ENCODE measurements at regions of chr11 and their contacts with region 1.

Region 1: DNA sequence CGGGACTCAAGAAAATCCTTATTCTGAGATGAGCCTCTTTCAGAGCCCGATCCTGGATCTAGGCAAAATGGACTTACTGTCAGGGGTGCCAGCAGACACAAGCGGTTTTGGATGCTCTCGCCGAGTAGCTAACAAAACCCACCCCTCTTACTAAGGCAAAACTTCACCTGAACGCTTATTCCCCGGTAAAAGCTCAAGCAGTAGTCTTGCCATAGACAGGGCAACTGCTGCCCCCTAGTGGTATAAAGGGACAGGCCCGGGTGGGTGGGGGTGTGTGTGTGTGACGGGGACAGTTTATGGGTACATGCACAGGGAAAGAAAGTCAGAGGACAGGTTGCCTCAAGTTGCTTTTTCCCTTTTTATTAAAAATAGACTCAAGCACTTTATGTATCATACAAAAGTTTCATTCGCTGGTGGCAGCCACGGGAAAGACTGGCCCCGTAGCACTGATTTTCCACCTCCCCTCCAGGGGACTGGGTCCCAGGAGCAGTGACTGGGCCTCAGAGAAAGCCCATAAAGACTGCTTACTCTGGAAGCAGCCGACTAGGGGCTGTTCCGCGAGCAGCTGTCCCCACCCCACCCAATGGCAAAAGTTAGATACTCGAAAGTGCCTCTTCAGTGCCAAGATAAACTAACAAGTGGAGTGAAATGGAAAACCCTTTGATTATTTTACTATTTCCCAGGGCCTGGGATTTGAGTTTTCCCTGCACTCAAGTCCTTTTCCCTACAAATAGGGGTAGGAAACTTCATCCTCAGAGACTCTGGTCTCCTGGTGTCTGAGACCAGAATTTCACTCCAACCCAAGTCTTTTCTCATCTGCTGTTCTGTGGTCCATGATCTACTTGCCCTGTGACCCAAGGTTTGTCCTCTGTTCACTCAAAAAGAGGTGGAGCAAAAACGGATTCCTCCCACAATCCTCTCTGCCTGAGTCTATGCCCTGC is 4.7 kb downstream of the YPEL4 start:
- DNase-seq: peak; percentile 73 to 90 (median 85)
- ATAC-seq: peak; percentile 81 to 89 (median 85)
- H3K4me3 ChIP-seq: no peak overlapping the region
- H3K27ac ChIP-seq: no peak overlapping the region
- H3K4me1 ChIP-seq: peaks cover 0 to 4% (median 4%) of the 10 kb centered on the region in 3 donors
- H3K27me3 ChIP-seq: peaks cover 0 to 2% (median 0%) of the 10 kb centered on the region in 4 donors
- CTCF ChIP-seq: peak; percentile 85 to 91 (median 88)

Region 2: GRCh38 chr11:57340039-57340615 is 304.9 kb before region 1 on chr11:
- intact Hi-C with region 1: loop called in 2 of 3 experiments (anchors 5 to 10 kb)
- DNase-seq: peak in 1 of 6 donors; percentile 8
- ATAC-seq: no peak
- H3K4me3 ChIP-seq: no peak overlapping the region
- H3K27ac ChIP-seq: no peak overlapping the region
- H3K4me1 ChIP-seq: peaks cover 0 to under 1% (median under 1%) of the 10 kb centered on the region in 3 donors
- H3K27me3 ChIP-seq: no peaks in the 10 kb centered on the region
- CTCF ChIP-seq: no peak

Region 3: GRCh38 chr11:57567515-57568329 is 77.3 kb before region 1 on chr11 and contains the start of gene UBE2L6:
- intact Hi-C with region 1: loop called (anchors 5 to 10 kb)
- DNase-seq: peak; percentile 42 to 84 (median 75)
- ATAC-seq: peak; percentile 84 to 88 (median 88)
- H3K4me3 ChIP-seq: peak within 1 kb of the TSS; percentile 42 to 83 (median 76)
- H3K27ac ChIP-seq: peak within 1 kb of the TSS; percentile 17 to 81 (median 51)
- H3K4me1 ChIP-seq: peaks cover 0 to 12% (median 0%) of the 10 kb centered on the region in 3 donors
- H3K27me3 ChIP-seq: no peaks in the 10 kb centered on the region
- CTCF ChIP-seq: peak in 3 of 4 donors; percentile 80 to 89 (median 83)
- total RNA-seq, gene UBE2L6: 9.6 to 46.4 (median 11.5) TPM

Region 4: DNA sequence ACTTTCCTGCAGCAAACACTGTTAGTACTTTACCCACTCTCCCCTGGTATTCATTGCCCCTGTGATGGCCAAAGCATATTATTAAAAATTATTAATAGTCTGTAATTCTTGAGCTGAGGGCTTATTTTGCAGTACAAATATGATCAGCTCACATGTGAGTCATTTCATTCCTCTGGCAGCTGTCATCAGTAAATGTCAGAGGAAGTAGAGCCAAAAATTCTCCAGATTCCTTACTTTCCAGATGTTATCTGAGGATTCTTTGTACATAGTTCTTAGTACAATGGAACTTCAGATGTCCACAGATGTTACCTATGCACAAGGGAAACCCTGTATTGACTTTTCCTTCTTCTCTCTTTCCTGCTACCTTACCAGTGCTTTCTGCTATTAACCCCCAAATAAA is 749.2 kb after region 1 on chr11:
- intact Hi-C with region 1: no loop called
- DNase-seq: no peak
- ATAC-seq: no peak
- H3K4me3 ChIP-seq: no peak overlapping the region
- H3K27ac ChIP-seq: no peak overlapping the region
- H3K4me1 ChIP-seq: no peaks in the 10 kb centered on the region
- H3K27me3 ChIP-seq: no peaks in the 10 kb centered on the region
- CTCF ChIP-seq: no peak